CD8-positive, alpha-beta T cell (primary cell): ENCODE measurements at regions of chr14 and their contacts with region 1.

Region 1: DNA sequence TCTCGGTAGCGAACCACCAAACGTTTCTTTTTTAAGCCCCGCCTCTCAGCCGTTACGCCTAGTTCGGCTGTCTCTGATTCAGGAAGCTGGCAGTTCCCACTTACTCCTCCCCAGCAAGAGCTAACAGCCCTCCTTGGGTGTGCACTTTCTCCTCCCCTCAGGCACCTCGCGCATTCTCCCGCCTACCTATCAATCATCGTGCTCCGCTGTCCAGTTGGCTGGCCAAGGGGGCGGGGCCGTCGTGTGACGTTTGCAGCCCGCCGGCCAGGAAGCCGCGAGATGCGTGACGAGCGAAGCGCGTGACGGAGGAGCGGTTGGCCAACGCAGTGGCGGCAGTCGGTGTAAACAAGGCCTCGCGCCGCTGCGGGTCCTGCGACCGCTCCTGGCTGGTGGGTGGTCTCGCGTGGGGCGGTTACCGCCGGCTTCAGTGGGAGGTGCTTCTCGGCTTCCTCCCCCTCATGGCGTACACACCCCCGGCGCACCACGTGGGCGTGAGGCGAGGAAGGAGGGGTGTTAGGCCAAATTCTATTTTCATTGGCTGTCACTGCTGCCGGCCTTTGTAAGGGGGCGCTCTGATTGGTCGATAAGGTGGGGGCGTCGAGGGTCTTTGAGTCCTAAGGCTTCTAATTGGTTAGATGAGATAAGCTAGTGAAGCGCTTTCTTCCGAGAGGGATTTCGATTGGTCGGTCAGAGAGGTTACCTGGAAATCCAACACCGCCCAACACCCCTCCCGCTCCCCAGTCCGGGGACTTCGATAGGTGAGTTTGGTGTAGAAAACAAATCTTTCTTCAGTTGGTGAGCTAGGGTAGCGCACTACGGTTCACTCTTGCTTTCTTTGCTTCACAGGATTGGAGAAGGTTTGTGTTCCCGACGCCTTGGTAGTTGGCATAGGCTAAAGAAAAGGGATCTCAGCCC is at the starts of genes DCAF11 and NRL:
- DNase-seq: peak; percentile 95 to 100 (median 98)
- ATAC-seq: peak; percentile 82
- H3K4me3 ChIP-seq: peak within 1 kb of the TSS; percentile 72 to 87
- H3K4me3 Mint-ChIP-seq: peak within 1 kb of the TSS; percentile 98
- H3K27ac ChIP-seq: peak within 1 kb of the TSS; percentile 97 to 99
- H3K27ac Mint-ChIP-seq: peak within 1 kb of the TSS; percentile 100
- H3K4me1 ChIP-seq: peaks cover 19% of the 10 kb centered on the region
- H3K4me1 Mint-ChIP-seq: peaks cover 31% of the 10 kb centered on the region
- H3K27me3 ChIP-seq: no peaks in the 10 kb centered on the region
- H3K27me3 Mint-ChIP-seq: no peaks in the 10 kb centered on the region
- CTCF ChIP-seq: no peak
- total RNA-seq, gene DCAF11: 88.7 to 89.7 TPM
- total RNA-seq, gene NRL: 3.4 to 3.8 TPM

Region 2: GRCh38 chr14:23057757-23058653 is 1056.8 kb before region 1 on chr14:
- CTCF ChIA-PET with region 1: no interaction called
- POLR2A ChIA-PET with region 1: no interaction called
- intact Hi-C with region 1: no loop called
- DNase-seq: peak; percentile 70 to 92 (median 88)
- ATAC-seq: peak; percentile 70
- H3K4me3 ChIP-seq: peak overlapping the region; percentile 56 to 84
- H3K4me3 Mint-ChIP-seq: peak overlapping the region; percentile 87
- H3K27ac ChIP-seq: no peak overlapping the region
- H3K27ac Mint-ChIP-seq: peak overlapping the region; percentile 18
- H3K4me1 ChIP-seq: peaks cover 10% of the 10 kb centered on the region
- H3K4me1 Mint-ChIP-seq: peaks cover 17% of the 10 kb centered on the region
- H3K27me3 ChIP-seq: no peaks in the 10 kb centered on the region
- H3K27me3 Mint-ChIP-seq: no peaks in the 10 kb centered on the region
- CTCF ChIP-seq: peak; percentile 95

Region 3: GRCh38 chr14:23469127-23469905 is 645.5 kb before region 1 on chr14 and contains the start of gene NGDN:
- CTCF ChIA-PET with region 1: no interaction called
- POLR2A ChIA-PET with region 1: interaction called, 3 read pairs
- intact Hi-C with region 1: loop called in 1 of 2 experiments (anchors 10 kb)
- DNase-seq: peak; percentile 84 to 99 (median 93)
- ATAC-seq: peak; percentile 89
- H3K4me3 ChIP-seq: peak within 1 kb of the TSS; percentile 71 to 83
- H3K4me3 Mint-ChIP-seq: no peak within 1 kb of the TSS
- H3K27ac ChIP-seq: peak within 1 kb of the TSS; percentile 80 to 93
- H3K27ac Mint-ChIP-seq: peak within 1 kb of the TSS; percentile 6
- H3K4me1 ChIP-seq: peaks cover 16% of the 10 kb centered on the region
- H3K4me1 Mint-ChIP-seq: peaks cover 12% of the 10 kb centered on the region
- H3K27me3 ChIP-seq: no peaks in the 10 kb centered on the region
- H3K27me3 Mint-ChIP-seq: no peaks in the 10 kb centered on the region
- CTCF ChIP-seq: peak; percentile 83
- total RNA-seq, gene NGDN: 173 TPM

Region 4: DNA sequence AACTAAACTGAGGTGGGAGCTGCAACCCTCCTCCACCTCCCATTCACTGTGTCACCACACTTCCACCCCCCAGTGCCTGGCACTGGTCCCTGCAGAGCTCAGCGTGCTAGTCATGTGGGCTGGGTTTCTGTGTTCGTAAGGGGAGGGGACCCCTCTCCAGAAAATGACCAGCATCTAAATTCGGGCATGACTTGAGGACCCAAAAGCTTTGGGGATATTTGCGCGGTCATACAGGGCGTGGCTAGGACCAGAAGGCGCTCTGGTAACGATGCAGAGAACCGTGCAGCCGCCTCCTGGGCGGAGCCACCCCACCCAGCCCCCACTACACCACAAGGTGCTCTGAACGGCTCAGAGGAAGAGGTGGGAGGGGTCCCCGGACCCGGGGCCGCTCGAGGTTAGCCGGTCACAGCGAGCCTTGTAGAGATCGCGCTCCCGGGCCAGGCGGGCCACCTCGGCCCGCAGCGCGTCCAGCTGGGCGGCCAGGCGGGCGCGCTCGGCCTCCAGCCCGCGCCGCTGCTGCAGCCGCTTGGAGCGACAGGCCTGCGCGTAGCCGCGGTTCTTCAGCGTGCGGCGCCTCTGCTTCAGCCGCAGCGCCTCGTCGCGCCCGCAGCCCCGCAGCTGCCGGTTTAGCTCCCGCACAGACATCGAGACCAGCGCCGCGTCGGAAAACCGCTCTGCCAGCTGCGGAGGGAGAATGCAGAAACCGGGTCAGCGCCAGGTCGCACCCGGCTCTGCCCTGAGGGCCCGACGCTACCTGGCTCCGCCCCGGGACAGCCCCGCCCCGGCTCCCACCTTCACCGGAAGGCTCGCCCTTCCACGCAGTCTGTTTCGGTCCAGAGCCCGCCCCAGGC is 33.7 kb before region 1 on chr14:
- CTCF ChIA-PET with region 1: interaction called, 16 read pairs
- POLR2A ChIA-PET with region 1: interaction called, 30 read pairs
- intact Hi-C with region 1: loop called in 1 of 2 experiments (anchors 1 kb)
- DNase-seq: peak; percentile 46 to 83 (median 68)
- ATAC-seq: peak; percentile 89
- H3K4me3 ChIP-seq: peak overlapping the region; percentile 48 to 68
- H3K4me3 Mint-ChIP-seq: peak overlapping the region; percentile 87
- H3K27ac ChIP-seq: peak overlapping the region in 1 of 2 experiments; percentile 72
- H3K27ac Mint-ChIP-seq: peak overlapping the region; percentile 88
- H3K4me1 ChIP-seq: peaks cover 14% of the 10 kb centered on the region
- H3K4me1 Mint-ChIP-seq: peaks cover 21% of the 10 kb centered on the region
- H3K27me3 ChIP-seq: no peaks in the 10 kb centered on the region
- H3K27me3 Mint-ChIP-seq: no peaks in the 10 kb centered on the region
- CTCF ChIP-seq: no peak

Region 5: DNA sequence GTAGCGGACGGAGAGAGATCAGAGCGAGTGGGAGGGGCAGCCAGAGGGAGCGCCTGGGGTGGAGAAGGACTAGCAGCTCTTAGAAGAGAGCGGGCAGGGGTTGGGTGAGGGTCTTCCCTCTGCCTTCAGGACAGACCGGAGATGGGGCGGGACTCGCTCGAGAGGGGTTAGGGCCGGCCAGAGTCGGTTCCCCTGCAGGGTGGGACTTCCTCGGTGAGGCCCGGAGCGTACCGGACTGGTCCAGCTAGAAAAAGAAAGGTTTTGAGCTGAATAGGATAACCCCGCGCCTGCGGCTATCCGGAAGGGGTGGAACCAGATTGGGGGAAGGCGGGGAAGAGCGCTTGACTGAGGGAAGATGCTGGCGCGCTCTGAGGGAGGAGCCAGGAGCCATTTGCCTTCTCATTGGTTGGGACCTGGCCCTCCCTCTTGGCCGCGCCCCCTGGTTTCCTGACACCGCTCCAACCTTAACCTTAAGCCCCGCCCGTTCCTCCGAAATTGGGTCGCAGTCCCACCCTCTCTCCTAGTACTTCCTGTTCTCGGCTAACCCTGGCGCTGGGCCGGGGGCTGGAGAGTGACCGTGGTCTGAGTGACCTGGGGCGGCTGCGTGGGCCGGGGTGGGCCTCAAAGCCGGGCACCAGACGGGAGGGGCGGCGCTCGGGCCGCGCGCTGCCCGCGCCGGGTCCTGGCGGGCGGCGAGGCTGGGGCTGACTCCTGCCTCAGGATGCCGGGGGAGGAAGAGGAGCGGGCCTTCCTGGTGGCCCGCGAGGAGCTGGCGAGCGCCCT is 32.4 kb after region 1 on chr14 and contains the start of gene RNF31:
- CTCF ChIA-PET with region 1: interaction called, 15 read pairs
- POLR2A ChIA-PET with region 1: interaction called, 47 read pairs
- intact Hi-C with region 1: loop called (anchors 1 kb)
- DNase-seq: peak; percentile 93 to 99 (median 97)
- ATAC-seq: peak; percentile 89
- H3K4me3 ChIP-seq: peak within 1 kb of the TSS; percentile 96 to 99
- H3K4me3 Mint-ChIP-seq: peak within 1 kb of the TSS; percentile 95
- H3K27ac ChIP-seq: peak within 1 kb of the TSS; percentile 79 to 91
- H3K27ac Mint-ChIP-seq: peak within 1 kb of the TSS; percentile 93
- H3K4me1 ChIP-seq: peaks cover 34% of the 10 kb centered on the region
- H3K4me1 Mint-ChIP-seq: peaks cover 53% of the 10 kb centered on the region
- H3K27me3 ChIP-seq: no peaks in the 10 kb centered on the region
- H3K27me3 Mint-ChIP-seq: no peaks in the 10 kb centered on the region
- CTCF ChIP-seq: no peak
- total RNA-seq, gene RNF31: 45.4 to 51.7 TPM

Region 6: DNA sequence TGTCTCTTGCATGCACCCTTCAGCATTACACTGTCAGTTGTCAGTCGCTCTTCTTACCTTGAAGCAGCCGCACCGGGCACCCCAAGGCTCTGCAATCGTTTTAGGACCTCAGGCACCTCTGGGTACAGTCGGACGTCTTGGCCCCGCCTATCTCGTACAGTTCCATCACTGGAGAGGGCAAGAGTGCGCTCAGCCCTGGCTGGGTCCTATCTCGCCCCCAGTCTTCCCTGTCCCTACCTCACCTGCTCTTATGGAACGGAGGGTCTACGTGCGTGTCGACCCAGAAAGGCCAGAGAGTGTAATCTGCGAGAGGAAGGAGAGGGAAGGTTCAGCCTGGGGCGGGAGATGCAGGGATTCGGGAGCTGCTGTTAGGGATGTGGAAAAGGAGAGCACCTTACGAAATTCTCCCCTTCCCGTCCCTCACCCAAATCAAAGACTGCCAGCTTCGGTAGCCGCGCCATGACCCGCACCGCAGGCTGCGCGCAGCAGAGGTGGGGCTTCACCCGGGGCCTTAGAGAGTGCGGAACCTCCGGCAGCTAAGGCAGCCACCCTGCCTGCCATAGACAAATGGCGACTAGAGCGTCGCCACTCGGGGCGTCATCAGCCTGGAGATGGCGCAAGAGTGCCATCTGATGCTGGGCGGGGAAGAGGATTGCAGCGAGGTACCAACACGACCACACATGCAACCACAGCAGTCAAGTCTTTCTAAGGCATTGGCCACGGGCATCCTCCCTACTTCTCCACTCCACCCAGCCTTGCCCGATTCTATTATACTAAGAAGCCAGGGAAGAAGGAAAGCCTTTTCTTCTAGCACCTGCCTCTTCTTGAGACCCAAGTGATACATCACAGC is 100.9 kb after region 1 on chr14 and contains the start of gene MDP1:
- CTCF ChIA-PET with region 1: no interaction called
- POLR2A ChIA-PET with region 1: interaction called, 14 read pairs
- intact Hi-C with region 1: loop called (anchors 1 to 5 kb)
- DNase-seq: peak; percentile 75 to 96 (median 88)
- ATAC-seq: peak; percentile 72
- H3K4me3 ChIP-seq: peak within 1 kb of the TSS; percentile 86 to 95
- H3K4me3 Mint-ChIP-seq: peak within 1 kb of the TSS; percentile 93
- H3K27ac ChIP-seq: peak within 1 kb of the TSS; percentile 87 to 97
- H3K27ac Mint-ChIP-seq: peak within 1 kb of the TSS; percentile 99
- H3K4me1 ChIP-seq: peaks cover 32% of the 10 kb centered on the region
- H3K4me1 Mint-ChIP-seq: peaks cover 52% of the 10 kb centered on the region
- H3K27me3 ChIP-seq: no peaks in the 10 kb centered on the region
- H3K27me3 Mint-ChIP-seq: no peaks in the 10 kb centered on the region
- CTCF ChIP-seq: peak; percentile 63
- total RNA-seq, gene MDP1: 4.2 to 4.5 TPM

Region 7: GRCh38 chr14:24299255-24300195 is 184.7 kb after region 1 on chr14 and contains the starts of genes DHRS1 and NOP9:
- CTCF ChIA-PET with region 1: interaction called, 3 read pairs
- POLR2A ChIA-PET with region 1: no interaction called
- intact Hi-C with region 1: loop called in 1 of 2 experiments (anchors 1 kb)
- DNase-seq: peak; percentile 82 to 98 (median 92)
- ATAC-seq: peak; percentile 78
- H3K4me3 ChIP-seq: peak within 1 kb of the TSS; percentile 80 to 83
- H3K4me3 Mint-ChIP-seq: peak within 1 kb of the TSS; percentile 94
- H3K27ac ChIP-seq: peak within 1 kb of the TSS; percentile 80 to 85
- H3K27ac Mint-ChIP-seq: peak within 1 kb of the TSS; percentile 96
- H3K4me1 ChIP-seq: peaks cover 28% of the 10 kb centered on the region
- H3K4me1 Mint-ChIP-seq: peaks cover 51% of the 10 kb centered on the region
- H3K27me3 ChIP-seq: no peaks in the 10 kb centered on the region
- H3K27me3 Mint-ChIP-seq: no peaks in the 10 kb centered on the region
- CTCF ChIP-seq: no peak
- total RNA-seq, gene DHRS1: 24.3 to 28.5 TPM
- total RNA-seq, gene NOP9: 35.6 to 35.8 TPM